ENCODE measurements at regions of chr9 and their contacts with region 1.

Region 1: GRCh38 chr9:118170032-118170955 is 466.1 kb downstream of the TLR4 start:
- DNase-seq: peak; percentile 34
- H3K4me3 ChIP-seq: no peak overlapping the region
- CTCF ChIP-seq: peak; percentile 85

Region 2: GRCh38 chr9:117644133-117644931 is 526.0 kb before region 1 on chr9:
- in situ Hi-C with region 1: loop called (anchors 25 kb)
- DNase-seq: peak; percentile 36
- H3K4me3 ChIP-seq: no peak overlapping the region
- CTCF ChIP-seq: peak; percentile 94

Region 3: DNA sequence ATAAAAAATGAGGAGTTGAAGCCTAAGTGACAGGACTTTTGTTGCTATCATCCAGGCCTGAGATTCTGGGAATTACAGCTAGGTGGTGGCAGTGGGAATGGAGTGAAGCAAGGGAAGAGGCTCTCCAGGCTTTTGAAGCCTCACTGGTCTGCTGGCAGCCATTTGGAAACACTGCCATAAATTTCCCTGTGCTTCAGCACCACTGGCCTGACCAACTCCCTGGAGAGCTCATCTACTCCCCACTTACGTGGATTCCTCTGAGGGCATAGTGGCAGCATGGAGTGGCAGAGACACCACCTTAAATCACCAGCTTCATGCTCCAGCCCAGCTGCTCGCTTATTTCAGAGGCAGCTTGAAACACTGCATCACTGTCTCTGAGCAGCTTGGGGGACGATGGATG is 52.1 kb after region 1 on chr9:
- in situ Hi-C with region 1: no loop called
- DNase-seq: no peak
- H3K4me3 ChIP-seq: no peak overlapping the region
- CTCF ChIP-seq: no peak

Region 4: DNA sequence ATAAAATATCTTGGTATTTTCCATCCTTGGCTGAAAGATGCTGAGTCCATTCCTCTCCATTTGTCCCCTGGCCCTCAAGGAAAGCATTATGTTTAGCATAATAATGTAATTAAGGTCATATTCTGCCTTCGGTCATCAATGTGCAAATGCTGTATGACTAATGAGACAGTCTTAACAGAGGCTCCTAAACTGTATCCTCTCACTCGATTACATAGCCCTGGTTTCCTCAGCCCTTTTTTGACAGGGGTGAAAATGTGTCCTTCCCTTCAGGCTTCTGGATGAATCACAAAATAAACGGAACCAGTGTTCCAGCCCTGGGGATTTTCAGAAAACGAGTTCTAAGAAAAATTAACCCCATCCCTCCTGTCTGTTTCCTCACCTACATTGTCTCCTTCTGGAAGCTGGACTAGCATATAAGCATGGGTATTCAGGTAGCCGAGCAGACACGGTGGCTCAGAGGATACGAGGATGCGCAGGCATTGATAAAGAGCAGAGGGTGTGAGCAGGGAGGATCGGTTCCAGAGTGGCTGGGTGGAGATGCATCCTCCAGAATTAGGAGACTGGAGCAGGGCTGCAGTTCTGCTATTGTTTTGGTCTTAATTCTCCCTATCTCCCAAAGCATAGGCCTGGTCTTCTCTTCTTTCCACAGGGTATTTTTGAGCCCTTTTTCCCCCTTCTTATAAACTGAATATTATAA is 276.8 kb after region 1 on chr9:
- in situ Hi-C with region 1: no loop called
- DNase-seq: no peak
- H3K4me3 ChIP-seq: no peak overlapping the region
- CTCF ChIP-seq: no peak

Measured in astrocyte of the cerebellum (primary cell).